Natural killer cell (primary cell): ENCODE measurements at regions of chr19 and their contacts with region 1.

Region 1: GRCh38 chr19:56222901-56223300 is 20.8 kb downstream of the ZSCAN5C start:
- DNase-seq: no peak
- ATAC-seq: no peak
- H3K4me3 ChIP-seq: no peak overlapping the region
- H3K4me3 Mint-ChIP-seq: no peak overlapping the region
- H3K27ac ChIP-seq: no peak overlapping the region
- H3K27ac Mint-ChIP-seq: no peak overlapping the region
- H3K4me1 ChIP-seq: no peaks in the 10 kb centered on the region
- H3K4me1 Mint-ChIP-seq: peaks cover 0 to 3% of the 10 kb centered on the region in 2 donors
- H3K27me3 ChIP-seq: no peaks in the 10 kb centered on the region
- H3K27me3 Mint-ChIP-seq: peaks cover 4 to 5% of the 10 kb centered on the region in 2 donors
- CTCF ChIP-seq: no peak

Region 2: DNA sequence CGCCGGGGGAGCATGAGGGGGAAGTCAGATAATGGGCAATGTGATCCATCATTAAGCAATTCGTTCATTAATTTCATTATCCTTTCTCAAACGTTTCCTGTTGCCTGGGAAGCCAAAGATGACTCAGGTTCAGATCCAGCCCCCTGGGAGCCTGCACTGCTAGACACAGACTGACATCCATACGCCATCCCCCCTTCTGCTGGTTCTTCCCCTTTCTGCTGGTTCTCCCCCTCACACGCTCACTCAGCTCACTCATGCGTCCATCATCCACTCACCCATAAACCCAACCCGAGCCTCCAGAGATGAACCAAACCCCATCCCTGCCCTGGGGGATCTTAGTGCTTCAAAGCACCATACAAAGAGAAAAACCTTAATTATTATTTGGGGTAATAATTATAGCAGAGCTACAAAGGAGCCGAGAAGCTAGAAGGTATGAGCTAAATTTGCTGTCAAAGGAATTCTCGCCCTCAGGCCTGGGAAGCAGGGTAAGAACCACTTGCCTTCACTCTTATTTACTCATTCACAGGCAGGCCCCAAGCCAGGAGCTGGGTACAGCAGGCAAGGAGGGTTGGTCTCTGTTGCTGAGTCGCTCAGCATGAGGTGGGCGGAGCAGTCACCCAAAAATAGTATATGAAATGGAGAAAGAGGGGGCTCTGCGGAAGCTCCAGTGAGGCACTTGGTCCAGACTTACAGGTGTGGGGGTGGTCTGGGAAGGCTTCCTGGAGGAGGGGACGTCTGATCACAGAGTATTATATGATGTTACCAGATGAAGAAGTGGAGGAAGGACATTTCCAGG is 88.8 kb before region 1 on chr19:
- intact Hi-C with region 1: no loop called
- DNase-seq: no peak
- ATAC-seq: no peak
- H3K4me3 ChIP-seq: no peak overlapping the region
- H3K4me3 Mint-ChIP-seq: no peak overlapping the region
- H3K27ac ChIP-seq: no peak overlapping the region
- H3K27ac Mint-ChIP-seq: no peak overlapping the region
- H3K4me1 ChIP-seq: peaks cover 6% of the 10 kb centered on the region
- H3K4me1 Mint-ChIP-seq: no peaks in the 10 kb centered on the region
- H3K27me3 ChIP-seq: no peaks in the 10 kb centered on the region
- H3K27me3 Mint-ChIP-seq: no peaks in the 10 kb centered on the region
- CTCF ChIP-seq: no peak

Region 3: GRCh38 chr19:56211718-56212117 is 11.2 kb before region 1 on chr19:
- intact Hi-C with region 1: loop called (anchors 1 kb)
- DNase-seq: no peak
- ATAC-seq: no peak
- H3K4me3 ChIP-seq: no peak overlapping the region
- H3K4me3 Mint-ChIP-seq: no peak overlapping the region
- H3K27ac ChIP-seq: no peak overlapping the region
- H3K27ac Mint-ChIP-seq: no peak overlapping the region
- H3K4me1 ChIP-seq: no peaks in the 10 kb centered on the region
- H3K4me1 Mint-ChIP-seq: no peaks in the 10 kb centered on the region
- H3K27me3 ChIP-seq: no peaks in the 10 kb centered on the region
- H3K27me3 Mint-ChIP-seq: peaks cover 3 to 11% of the 10 kb centered on the region in 2 donors
- CTCF ChIP-seq: no peak

Region 4: DNA sequence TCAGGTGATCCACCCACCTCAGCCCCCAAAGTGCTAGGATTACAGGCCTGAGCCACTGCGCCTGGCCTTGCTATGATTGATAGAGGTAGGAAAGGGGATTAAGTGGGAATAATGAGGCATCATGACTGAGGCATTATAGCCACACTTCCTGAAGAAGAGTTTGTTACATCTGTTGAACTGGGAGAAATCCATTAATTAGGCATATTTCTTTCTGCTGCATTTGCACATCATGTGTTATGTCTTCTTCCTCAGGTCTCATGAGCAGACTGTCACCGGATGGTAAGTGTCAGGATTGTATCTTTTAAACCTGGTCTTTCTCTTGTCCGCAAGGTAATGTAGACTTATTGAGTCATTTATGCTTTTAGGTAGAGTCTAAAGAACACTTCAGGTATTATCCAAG is 61.8 kb after region 1 on chr19:
- intact Hi-C with region 1: no loop called
- DNase-seq: no peak
- ATAC-seq: no peak
- H3K4me3 ChIP-seq: no peak overlapping the region
- H3K4me3 Mint-ChIP-seq: no peak overlapping the region
- H3K27ac ChIP-seq: no peak overlapping the region
- H3K27ac Mint-ChIP-seq: no peak overlapping the region
- H3K4me1 ChIP-seq: no peaks in the 10 kb centered on the region
- H3K4me1 Mint-ChIP-seq: no peaks in the 10 kb centered on the region
- H3K27me3 ChIP-seq: no peaks in the 10 kb centered on the region
- H3K27me3 Mint-ChIP-seq: no peaks in the 10 kb centered on the region
- CTCF ChIP-seq: no peak